Activated T-helper 2 cell treated with anti-CD3 and anti-CD28 coated beads, Interferon-gamma antibody, Interleukin-2, Interleukin-4, amounts not matched to agents 10 μg/mL and 5 μg/mL and 100 μg/mL, durations not matched to agents 14 hours and 24 hours and 36 hours (primary cell): ENCODE measurements at regions of chr12 and their contacts with region 1.

Region 1: GRCh38 chr12:103441437-103442181 is 54.2 kb downstream of the C12orf42 start:
- DNase-seq: peak; percentile 44
- H3K4me3 Mint-ChIP-seq: peak overlapping the region; percentile 61
- H3K27ac Mint-ChIP-seq: peak overlapping the region; percentile 86
- H3K4me1 Mint-ChIP-seq: peaks cover 13% of the 10 kb centered on the region
- H3K27me3 Mint-ChIP-seq: no peaks in the 10 kb centered on the region

Region 2: DNA sequence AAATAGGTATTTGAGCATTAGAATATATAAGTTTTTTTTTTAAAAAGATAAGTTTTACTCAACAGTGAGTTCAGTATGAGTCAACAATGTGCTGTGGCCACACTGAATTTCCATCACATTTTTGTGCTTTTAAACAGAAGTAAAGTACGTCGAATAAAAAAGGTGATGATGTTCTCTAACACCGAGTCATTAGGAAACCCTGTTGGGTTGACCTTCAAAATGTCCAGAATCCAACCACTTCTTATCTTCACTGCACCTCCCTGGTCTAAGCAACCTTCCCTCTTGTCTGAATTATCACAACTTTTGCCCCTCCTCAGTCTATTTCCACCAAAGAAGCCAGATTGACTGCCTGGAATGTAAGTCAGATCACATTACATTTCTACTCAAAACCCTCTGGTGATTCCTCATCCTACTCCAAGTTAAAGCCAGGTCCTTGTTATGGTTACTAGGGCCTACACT is 1659.3 kb before region 1 on chr12:
- intact Hi-C with region 1: loop called (anchors 5 kb)
- DNase-seq: no peak
- H3K4me3 Mint-ChIP-seq: peak overlapping the region; percentile 0
- H3K27ac Mint-ChIP-seq: peak overlapping the region; percentile 92
- H3K4me1 Mint-ChIP-seq: peaks cover 66% of the 10 kb centered on the region
- H3K27me3 Mint-ChIP-seq: no peaks in the 10 kb centered on the region

Region 3: DNA sequence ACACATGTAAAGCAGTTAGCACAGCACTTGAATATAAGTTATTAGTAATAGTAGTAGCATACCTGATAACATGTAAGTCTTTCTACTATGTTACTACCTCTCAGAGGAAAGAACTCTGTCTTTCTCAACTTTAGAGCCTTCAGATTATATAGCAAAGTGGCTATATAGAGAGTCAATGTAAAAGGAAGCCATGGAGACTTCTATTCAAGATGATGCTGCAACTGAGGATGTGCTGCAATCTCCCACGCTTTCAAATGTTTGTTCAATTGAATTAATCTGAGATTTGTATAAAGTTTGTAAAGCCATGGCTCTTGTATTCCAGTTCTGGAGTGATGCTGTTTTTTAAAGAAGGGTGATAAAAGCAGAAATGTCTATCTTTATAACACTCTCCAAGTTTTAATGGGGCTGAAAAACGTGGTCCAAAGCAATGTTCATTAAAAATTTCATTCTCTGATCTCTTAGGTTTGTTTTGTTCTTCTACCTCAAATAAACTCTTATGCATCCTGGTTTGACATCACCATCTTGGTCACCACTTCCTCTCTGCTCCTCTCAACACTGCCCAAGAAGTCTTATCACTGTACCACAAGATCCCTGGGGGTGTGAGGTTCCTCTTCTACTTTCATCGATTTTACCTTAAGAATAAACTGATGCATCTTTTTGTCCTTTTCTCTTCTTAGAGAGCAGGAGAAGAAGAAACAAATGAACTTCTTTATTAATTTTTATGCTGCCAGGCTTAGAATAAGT is 13.6 kb after region 1 on chr12:
- intact Hi-C with region 1: loop called (anchors 1 kb)
- DNase-seq: no peak
- H3K4me3 Mint-ChIP-seq: peak overlapping the region; percentile 15
- H3K27ac Mint-ChIP-seq: peak overlapping the region; percentile 13
- H3K4me1 Mint-ChIP-seq: peaks cover 48% of the 10 kb centered on the region
- H3K27me3 Mint-ChIP-seq: peaks cover 2% of the 10 kb centered on the region

Region 4: DNA sequence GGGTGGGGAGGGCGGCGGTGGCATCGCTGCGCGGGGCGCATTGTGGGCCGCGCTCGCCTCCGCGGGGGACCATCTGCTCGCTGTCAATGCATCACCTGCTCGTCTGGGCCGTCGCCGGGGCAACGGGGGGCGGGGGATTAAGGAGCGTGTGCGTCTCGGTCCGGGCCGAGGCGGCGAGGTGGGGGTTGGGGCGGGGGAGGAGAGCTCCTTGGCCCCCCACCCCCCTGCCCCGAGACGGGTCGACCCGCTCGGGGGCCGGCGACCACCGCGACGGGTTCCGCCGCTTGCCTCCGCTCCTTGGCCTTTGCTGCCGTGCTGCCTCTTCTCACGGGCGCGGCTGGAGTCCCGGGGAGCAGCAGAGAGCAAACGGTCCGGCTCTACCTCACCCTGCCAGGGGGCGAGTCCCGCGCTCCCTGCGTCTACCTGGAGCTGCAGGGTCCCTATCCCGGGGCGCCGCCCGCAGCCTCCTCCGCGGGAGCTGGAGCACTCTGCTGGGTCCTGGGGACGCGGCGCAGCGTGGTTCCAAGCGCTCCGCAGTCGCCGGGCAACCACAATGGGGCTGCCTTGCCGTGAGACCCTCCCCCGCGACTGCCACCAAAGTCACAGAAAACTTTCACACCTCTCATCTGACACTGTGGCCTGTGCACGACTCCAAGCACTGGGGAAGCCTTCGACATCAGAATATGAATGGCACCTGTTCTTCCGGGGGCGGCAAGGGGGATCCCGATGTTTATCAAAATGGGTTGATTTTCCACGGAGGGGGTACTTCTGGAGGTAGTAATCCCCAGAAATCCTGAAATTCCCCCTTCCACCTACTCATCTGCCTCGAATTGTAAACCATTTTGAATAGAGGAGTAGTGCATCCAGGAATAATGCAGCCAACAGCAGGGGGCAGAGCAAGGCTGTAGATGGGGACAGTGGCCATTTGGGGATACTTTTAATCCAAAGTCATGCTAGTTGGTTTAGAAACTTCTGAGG is 54.2 kb after region 1 on chr12 and contains the start of gene C12orf42:
- intact Hi-C with region 1: loop called (anchors 1 kb)
- DNase-seq: peak; percentile 25
- H3K4me3 Mint-ChIP-seq: peak within 1 kb of the TSS; percentile 75
- H3K27ac Mint-ChIP-seq: no peak within 1 kb of the TSS
- H3K4me1 Mint-ChIP-seq: peaks cover 24% of the 10 kb centered on the region
- H3K27me3 Mint-ChIP-seq: peaks cover 43% of the 10 kb centered on the region
- total RNA-seq, gene C12orf42: not detected in 2 replicates

Region 5: GRCh38 chr12:103647267-103647666 is 205.7 kb after region 1 on chr12:
- intact Hi-C with region 1: no loop called
- DNase-seq: no peak
- H3K4me3 Mint-ChIP-seq: no peak overlapping the region
- H3K27ac Mint-ChIP-seq: no peak overlapping the region
- H3K4me1 Mint-ChIP-seq: no peaks in the 10 kb centered on the region
- H3K27me3 Mint-ChIP-seq: peaks cover 4% of the 10 kb centered on the region